Calu3 (cell line): ENCODE measurements at regions of chr16 and their contacts with region 1.

Region 1: DNA sequence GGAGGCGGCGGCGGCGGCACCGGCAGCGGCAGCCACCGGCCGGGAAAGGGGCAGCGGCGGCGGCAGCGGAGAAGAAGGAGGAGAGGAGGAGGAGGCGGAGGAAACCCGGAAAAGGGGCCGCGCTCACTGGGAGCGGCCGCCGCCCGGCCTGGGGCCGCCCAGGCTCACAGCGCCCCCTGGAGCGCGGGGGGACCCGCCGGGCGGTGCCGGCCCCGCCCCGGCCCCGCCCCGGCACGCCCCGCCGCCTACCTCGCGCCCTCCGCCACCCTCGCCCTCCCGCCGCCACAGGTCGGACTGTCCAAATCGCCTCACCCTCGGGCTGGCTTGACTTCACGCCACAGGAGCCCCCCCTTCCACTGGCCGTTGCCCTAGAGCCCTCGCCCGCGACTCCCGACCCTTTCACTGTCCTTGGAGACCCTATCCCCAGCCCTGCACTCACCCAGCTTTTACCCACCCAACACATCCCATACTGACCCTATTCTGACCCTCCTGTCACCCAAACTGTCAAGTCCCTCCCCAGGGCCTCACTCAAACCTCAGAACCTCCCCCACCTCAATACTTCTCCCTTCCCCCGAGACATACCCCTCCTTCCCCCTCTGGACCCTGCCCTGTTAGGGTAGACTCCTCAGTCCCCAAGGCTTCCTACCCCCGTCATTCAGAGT is at the start of gene CSNK2A2:
- DNase-seq: peak; percentile 86
- H3K4me3 Mint-ChIP-seq: peak within 1 kb of the TSS; percentile 93
- H3K27ac Mint-ChIP-seq: peak within 1 kb of the TSS; percentile 85
- H3K4me1 Mint-ChIP-seq: peaks cover 21% of the 10 kb centered on the region
- H3K27me3 Mint-ChIP-seq: peaks cover 45% of the 10 kb centered on the region
- CTCF ChIP-seq: peak; percentile 51
- total RNA-seq, gene CSNK2A2: 81.6 and 85.9 TPM in 2 replicates

Region 2: GRCh38 chr16:58035356-58036170 is 162.6 kb before region 1 on chr16:
- CTCF ChIA-PET with region 1: no interaction called
- intact Hi-C with region 1: no loop called
- DNase-seq: no peak
- H3K4me3 Mint-ChIP-seq: no peak overlapping the region
- H3K27ac Mint-ChIP-seq: no peak overlapping the region
- H3K4me1 Mint-ChIP-seq: peaks cover 22% of the 10 kb centered on the region
- H3K27me3 Mint-ChIP-seq: no peaks in the 10 kb centered on the region
- CTCF ChIP-seq: no peak

Region 3: GRCh38 chr16:58137581-58137980 is 60.6 kb before region 1 on chr16:
- CTCF ChIA-PET with region 1: no interaction called
- intact Hi-C with region 1: no loop called
- DNase-seq: no peak
- H3K4me3 Mint-ChIP-seq: no peak overlapping the region
- H3K27ac Mint-ChIP-seq: no peak overlapping the region
- H3K4me1 Mint-ChIP-seq: no peaks in the 10 kb centered on the region
- H3K27me3 Mint-ChIP-seq: no peaks in the 10 kb centered on the region
- CTCF ChIP-seq: no peak

Region 4: DNA sequence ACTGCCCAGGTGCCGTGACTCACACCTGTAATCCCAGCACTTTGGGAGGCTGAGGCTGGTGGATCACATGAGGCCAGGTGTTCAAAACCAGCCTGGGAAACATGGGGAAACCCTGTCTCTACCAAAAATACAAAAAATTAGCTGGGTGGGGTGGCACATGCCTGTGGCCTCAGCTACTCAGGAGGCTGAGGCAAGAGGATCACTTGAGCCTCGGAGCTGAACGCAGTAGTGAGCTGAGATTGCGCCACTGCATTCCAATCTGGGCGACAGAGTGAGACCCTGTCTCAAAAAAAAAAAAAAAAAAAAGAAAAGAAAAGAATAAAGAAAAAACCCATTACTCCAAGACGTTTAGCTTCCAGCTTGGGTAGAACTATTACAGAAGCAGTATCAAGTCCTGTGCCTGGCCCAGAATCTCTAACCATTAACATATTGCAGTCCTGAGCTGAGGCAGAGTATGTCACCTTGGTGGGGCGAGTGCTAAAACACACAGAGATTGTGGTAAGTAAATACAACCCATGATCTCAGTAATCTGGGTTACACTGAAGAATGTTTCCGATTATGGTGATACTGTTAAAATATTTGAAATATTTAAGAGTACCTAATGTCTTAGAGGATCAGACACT is 45.8 kb before region 1 on chr16:
- CTCF ChIA-PET with region 1: no interaction called
- intact Hi-C with region 1: no loop called
- DNase-seq: no peak
- H3K4me3 Mint-ChIP-seq: no peak overlapping the region
- H3K27ac Mint-ChIP-seq: no peak overlapping the region
- H3K4me1 Mint-ChIP-seq: no peaks in the 10 kb centered on the region
- H3K27me3 Mint-ChIP-seq: peaks cover 14% of the 10 kb centered on the region
- CTCF ChIP-seq: no peak

Region 5: DNA sequence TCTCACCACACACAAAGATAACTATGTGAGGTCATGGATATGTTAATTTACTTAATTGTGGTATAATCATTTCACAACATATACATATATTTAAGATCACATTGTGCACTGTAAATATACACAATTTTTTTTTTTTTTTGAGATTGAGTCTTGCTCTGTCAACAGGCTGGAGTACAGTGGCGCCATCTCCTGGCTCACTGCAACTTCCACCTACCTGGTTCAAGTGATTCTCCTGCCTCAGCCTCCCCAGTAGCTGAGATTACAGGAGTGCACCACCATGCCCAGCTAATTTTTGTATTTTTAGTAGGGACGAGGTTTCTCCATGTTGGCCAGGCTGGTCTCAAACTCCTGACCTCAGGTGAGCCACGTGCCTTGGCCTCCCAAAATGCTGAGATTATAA is 108.2 kb after region 1 on chr16:
- CTCF ChIA-PET with region 1: no interaction called
- intact Hi-C with region 1: loop called (anchors 10 kb)
- DNase-seq: peak; percentile 36
- H3K4me3 Mint-ChIP-seq: no peak overlapping the region
- H3K27ac Mint-ChIP-seq: no peak overlapping the region
- H3K4me1 Mint-ChIP-seq: no peaks in the 10 kb centered on the region
- H3K27me3 Mint-ChIP-seq: peaks cover 25% of the 10 kb centered on the region
- CTCF ChIP-seq: peak; percentile 46